Right ventricle myocardium inferior (tissue), 1 donor: ENCODE measurements at regions of chr3 and their contacts with region 1.

Region 1: DNA sequence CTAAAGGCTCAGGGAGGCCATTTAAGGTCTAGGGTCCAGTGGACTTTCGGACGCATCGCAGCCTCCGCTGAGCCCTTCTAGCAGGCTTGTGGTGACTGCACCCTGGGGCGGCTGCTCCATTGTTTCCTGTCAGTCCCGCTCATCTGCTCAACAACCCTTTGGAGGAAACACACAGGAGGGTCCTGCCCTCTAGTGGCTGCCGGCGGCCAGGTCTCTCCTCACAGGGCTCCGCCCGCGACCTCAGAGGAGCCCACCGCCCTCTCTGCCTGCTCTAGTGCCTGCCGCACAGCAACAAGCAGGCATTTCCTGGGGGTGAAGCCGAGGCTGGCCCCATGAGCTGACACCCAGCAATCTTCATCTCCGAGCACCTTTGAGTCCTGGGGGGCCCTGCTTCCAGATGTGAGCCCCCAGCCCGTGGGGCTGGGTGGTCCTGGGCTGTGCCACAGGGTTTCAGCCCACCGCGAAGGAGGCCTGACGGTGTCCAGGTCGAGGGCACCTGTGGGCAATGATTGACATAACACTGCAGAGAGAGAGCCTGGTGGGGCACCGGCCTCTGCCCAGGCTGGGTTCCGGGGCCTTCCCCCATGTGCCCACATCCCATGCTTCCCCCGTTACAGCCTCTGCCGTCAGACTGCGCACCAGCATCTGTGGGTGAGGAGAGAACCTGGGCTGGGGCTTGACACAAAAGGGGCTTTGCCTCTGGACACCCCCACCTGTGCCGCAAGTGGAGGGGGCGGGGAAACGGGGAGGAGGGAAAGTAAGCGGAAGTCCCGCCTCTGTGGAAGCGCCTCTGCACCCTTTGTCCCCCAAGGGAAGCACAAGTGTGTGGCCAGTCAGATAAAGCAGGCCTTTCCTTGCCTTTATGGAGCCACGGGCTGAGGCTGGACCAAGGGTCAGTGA is 27.0 kb upstream of the SFMBT1 start:
- DNase-seq: peak; percentile 93
- ATAC-seq: peak; percentile 94

Region 2: DNA sequence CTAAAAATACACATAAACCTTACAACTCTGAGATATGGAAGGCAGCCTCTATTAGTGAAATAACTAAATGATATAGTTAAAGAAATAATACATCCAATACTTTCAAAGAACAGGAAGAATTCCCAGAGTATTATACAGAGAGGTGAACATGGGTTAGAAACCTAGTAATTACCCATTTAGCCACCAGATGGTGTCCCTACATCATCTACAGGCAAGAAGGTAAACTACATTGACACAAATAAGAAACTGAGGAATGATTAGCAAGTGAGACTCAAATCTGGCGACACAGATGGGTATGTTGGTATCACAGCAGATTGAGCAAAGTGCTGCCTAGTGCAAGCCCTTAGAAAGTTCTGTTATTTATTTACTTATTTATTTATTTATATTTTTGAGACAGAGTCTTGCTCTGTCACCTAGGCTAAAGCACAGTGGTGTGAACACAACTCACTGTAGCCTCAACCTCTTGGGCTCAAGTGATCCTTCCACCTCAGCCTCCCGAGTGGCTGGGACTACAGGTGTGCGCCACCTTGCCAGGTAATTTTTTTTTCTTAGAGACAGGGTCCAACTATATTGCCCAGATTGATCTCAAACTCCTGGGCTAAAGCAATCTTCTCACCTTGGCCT is 330.4 kb before region 1 on chr3:
- intact Hi-C with region 1: loop called (anchors 2 kb)
- DNase-seq: no peak
- ATAC-seq: no peak

Region 3: DNA sequence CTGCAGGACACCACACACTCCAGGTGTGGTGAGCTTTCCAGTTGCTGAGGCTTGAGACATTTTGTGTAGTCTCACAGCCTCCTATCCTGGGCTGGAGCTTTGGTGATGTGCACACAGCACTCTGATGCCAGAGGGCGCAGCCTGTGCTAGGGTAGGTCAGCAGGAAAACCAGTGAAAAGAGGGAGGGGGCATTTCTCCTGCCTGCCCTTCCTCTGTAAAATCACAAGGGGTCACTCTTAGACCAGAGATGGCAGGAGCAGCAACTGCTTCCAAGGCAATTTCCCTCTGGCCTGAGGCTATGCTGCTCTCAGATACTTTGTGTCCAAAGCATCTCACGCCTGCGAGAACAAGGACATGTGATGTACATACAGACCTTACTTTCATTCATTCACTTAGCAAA is 221.6 kb before region 1 on chr3:
- intact Hi-C with region 1: loop called (anchors 5 kb)
- DNase-seq: no peak
- ATAC-seq: peak; percentile 50

Region 4: DNA sequence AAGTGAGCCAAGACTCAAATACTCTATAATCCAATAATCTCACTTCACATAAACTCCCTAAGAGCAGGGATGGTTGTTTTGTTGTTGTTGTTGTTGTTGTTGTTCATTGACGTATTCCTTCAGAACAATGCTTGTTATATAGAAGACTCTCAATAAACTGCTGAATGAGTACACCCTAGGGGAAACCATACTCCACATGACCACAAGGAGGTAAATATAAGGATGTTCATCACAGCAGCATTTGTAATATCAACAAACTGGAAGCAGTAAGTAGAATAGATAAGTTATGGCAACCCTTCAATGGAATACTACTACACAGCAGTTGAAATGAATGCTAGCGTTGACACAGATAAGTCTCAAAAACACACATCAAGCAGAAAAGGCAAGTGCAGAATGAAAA is 113.1 kb before region 1 on chr3:
- intact Hi-C with region 1: no loop called
- DNase-seq: no peak
- ATAC-seq: no peak